ENCODE measurements at regions of chrX and their contacts with region 1.

Region 1: GRCh38 chrX:22220941-22221340 is 51.8 kb upstream of the CBLL2 start:
- DNase-seq: no peak
- H3K4me3 ChIP-seq: no peak overlapping the region
- H3K27ac ChIP-seq: no peak overlapping the region
- H3K4me1 ChIP-seq: no peaks in the 10 kb centered on the region
- H3K27me3 ChIP-seq: peaks cover 0 to 5% of the 10 kb centered on the region in 2 donors
- CTCF ChIP-seq: no peak
- POLR2A ChIP-seq: no peak

Region 2: DNA sequence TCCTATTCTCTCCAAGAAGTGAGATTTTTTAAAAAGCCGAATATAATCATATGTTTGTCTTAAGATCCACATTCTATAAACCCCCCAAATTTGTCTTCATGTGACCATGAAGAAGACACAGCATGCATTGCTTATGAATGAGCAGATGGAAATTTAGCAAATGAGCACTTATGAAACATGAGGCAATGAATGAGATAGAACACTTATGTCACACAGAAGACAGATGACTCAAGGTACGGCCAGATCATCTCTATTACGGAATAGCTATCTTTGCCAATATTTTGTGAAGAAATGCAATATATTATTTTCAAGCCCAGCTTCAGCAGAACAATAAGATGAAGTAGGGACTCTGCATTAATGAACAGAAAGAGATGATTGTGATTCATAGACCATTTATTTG is 167.5 kb before region 1 on chrX:
- intact Hi-C with region 1: loop called (anchors 5 kb)
- DNase-seq: no peak
- H3K4me3 ChIP-seq: no peak overlapping the region
- H3K27ac ChIP-seq: no peak overlapping the region
- H3K4me1 ChIP-seq: no peaks in the 10 kb centered on the region
- H3K27me3 ChIP-seq: peaks cover 0 to 14% of the 10 kb centered on the region in 2 donors
- CTCF ChIP-seq: no peak
- POLR2A ChIP-seq: no peak

Measured in breast epithelium (tissue), 4 donors.